Heart right ventricle (tissue), 16 donors: ENCODE measurements at regions of chr10 and their contacts with region 1.

Region 1: DNA sequence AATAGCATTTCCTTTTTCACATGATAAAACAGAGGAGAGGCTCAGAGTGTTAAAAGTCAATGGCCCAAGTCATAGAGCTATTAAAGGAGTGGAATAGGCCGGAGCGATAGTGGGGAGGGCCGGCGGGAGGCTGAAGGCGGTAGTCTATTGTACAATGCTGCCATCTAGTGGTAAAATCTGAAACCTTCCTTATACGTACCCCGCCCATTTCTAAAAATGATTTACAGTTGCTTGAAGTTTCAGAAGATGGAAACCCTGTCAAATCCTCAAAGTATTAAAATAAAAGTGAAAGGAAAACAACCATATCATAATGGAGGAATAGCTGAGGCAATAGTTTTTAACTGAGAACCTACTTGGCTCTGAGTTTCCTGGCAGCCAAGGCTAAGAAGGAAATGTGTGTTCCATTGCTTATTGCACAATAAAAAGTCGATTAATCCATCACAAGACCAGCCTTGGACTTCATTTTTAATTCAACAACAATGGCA is 209.1 kb downstream of the CCSER2 start:
- DNase-seq: peak; percentile 27 to 51
- ATAC-seq: peak; percentile 81 to 93 (median 90)
- H3K4me3 ChIP-seq: no peak overlapping the region
- H3K27ac ChIP-seq: no peak overlapping the region
- H3K4me1 ChIP-seq: peaks cover 0 to 14% (median 10%) of the 10 kb centered on the region in 9 donors
- H3K27me3 ChIP-seq: peaks cover 0 to 38% (median 32%) of the 10 kb centered on the region in 7 donors
- CTCF ChIP-seq: peak; percentile 70 to 93 (median 87)

Region 2: GRCh38 chr10:84264611-84265141 is 272.8 kb before region 1 on chr10:
- intact Hi-C with region 1: loop called (anchors 1 to 5 kb)
- DNase-seq: peak; percentile 56 to 58
- ATAC-seq: peak; percentile 87 to 94 (median 91)
- H3K4me3 ChIP-seq: no peak overlapping the region
- H3K27ac ChIP-seq: no peak overlapping the region
- H3K4me1 ChIP-seq: peaks cover 0 to 5% (median 0%) of the 10 kb centered on the region in 9 donors
- H3K27me3 ChIP-seq: peaks cover 0 to 25% (median 7%) of the 10 kb centered on the region in 7 donors
- CTCF ChIP-seq: peak; percentile 85 to 95 (median 93)

Region 3: DNA sequence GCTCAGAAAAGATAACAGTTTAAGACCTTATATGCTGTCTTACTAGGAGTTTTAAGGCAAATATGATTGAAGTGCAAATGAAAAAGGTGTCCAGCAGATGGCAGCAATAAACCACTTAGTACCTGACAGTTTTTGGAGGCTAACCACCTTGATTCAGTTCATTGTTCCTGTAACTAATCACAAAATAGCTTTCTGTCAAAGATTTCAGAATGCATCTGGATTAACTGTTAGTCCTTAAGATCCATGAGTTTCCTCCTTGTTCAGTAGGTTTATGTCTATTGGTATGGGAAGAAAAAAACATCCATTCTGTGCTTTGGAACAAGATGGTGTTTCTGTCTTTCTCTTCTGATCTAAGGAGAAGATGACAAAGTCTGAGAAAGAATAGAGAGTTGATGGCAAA is 162.5 kb before region 1 on chr10:
- intact Hi-C with region 1: loop called (anchors 1 to 5 kb)
- DNase-seq: peak in 1 of 2 donors; percentile 43
- ATAC-seq: peak in 3 of 8 donors; percentile 16 to 52 (median 37)
- H3K4me3 ChIP-seq: no peak overlapping the region
- H3K27ac ChIP-seq: no peak overlapping the region
- H3K4me1 ChIP-seq: peaks cover 0 to 7% (median 0%) of the 10 kb centered on the region in 9 donors
- H3K27me3 ChIP-seq: no peaks in the 10 kb centered on the region
- CTCF ChIP-seq: peak; percentile 52 to 80 (median 74)

Region 4: GRCh38 chr10:84429926-84430520 is 107.5 kb before region 1 on chr10:
- intact Hi-C with region 1: loop called in 2 of 10 experiments (anchors 5 kb)
- DNase-seq: peak; percentile 26 to 46
- ATAC-seq: peak in 3 of 8 donors; percentile 49 to 65 (median 56)
- H3K4me3 ChIP-seq: no peak overlapping the region
- H3K27ac ChIP-seq: no peak overlapping the region
- H3K4me1 ChIP-seq: peaks cover 0 to 93% (median 44%) of the 10 kb centered on the region in 9 donors
- H3K27me3 ChIP-seq: no peaks in the 10 kb centered on the region
- CTCF ChIP-seq: peak; percentile 30 to 78 (median 61)

Region 5: GRCh38 chr10:86371691-86372090 is 1834.2 kb after region 1 on chr10:
- intact Hi-C with region 1: loop called in 8 of 10 experiments (anchors 5 to 10 kb)
- DNase-seq: no peak
- ATAC-seq: no peak
- H3K4me3 ChIP-seq: no peak overlapping the region
- H3K27ac ChIP-seq: no peak overlapping the region
- H3K4me1 ChIP-seq: peaks cover 0 to 11% (median 7%) of the 10 kb centered on the region in 9 donors
- H3K27me3 ChIP-seq: peaks cover 7 to 86% (median 64%) of the 10 kb centered on the region in 7 donors
- CTCF ChIP-seq: no peak